ENCODE measurements at regions of chr11 and their contacts with region 1.

Region 1: GRCh38 chr11:12235947-12236743 is 125.8 kb downstream of the MICAL2 start:
- DNase-seq: no peak
- ATAC-seq: peak; percentile 35 to 54 (median 44)
- H3K4me3 ChIP-seq: no peak overlapping the region
- H3K27ac ChIP-seq: peak overlapping the region in 10 of 12 donors; percentile 22 to 82 (median 60)
- H3K4me1 ChIP-seq: peaks cover 0 to 60% (median 30%) of the 10 kb centered on the region in 12 donors
- H3K27me3 ChIP-seq: no peaks in the 10 kb centered on the region
- CTCF ChIP-seq: peak; percentile 54 to 81 (median 73)
- POLR2A ChIP-seq: no peak

Region 2: DNA sequence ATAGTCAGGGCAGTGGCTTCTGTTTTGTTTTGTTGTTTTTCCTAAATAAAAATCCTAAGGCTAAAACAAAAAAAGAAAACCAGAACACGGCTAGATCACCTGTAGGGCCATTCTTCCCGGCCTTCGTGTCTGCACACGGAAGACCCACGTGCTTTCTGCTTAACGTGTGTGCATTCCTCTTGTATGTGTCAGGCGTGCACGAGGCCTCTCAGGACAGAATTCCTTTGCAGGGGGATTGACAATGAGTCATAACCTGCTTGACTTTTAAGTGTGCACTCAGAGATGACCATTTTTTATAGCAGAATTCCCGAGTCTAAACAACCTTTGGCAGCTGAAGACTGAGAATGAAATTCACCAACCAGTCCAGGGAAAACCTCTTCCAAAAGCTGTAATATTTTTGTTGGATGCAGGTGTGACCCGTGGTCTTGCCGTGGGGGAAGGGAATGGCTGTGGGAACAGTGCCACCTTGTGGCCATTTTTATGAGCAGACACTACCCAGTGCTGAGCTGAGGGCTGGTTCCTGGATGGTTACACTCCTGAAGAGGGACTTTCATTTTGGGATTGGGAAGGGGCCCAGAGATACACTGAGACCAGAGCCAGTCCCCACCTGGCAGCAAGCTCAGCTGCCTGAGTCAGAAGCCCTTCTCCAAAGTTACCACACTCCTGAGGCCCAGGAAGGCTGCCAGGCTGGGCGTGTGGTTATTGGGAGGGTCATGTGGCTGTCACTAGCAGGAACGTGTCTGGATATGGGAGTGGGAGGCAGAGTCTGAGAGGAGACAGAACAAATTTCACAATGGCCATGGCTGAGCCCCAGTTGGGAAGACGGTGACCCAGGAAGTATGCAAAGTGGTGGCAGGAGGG is 192.0 kb before region 1 on chr11:
- intact Hi-C with region 1: loop called in 8 of 10 experiments (anchors 1 to 5 kb)
- DNase-seq: peak; percentile 80 to 88 (median 81)
- ATAC-seq: peak; percentile 82 to 90 (median 88)
- H3K4me3 ChIP-seq: peak overlapping the region in 3 of 12 donors; percentile 3 to 12 (median 8)
- H3K27ac ChIP-seq: peak overlapping the region in 11 of 12 donors; percentile 31 to 78 (median 66)
- H3K4me1 ChIP-seq: peaks cover 0 to 23% (median 17%) of the 10 kb centered on the region in 12 donors
- H3K27me3 ChIP-seq: no peaks in the 10 kb centered on the region
- CTCF ChIP-seq: peak; percentile 89 to 98 (median 93)
- POLR2A ChIP-seq: no peak

Region 3: DNA sequence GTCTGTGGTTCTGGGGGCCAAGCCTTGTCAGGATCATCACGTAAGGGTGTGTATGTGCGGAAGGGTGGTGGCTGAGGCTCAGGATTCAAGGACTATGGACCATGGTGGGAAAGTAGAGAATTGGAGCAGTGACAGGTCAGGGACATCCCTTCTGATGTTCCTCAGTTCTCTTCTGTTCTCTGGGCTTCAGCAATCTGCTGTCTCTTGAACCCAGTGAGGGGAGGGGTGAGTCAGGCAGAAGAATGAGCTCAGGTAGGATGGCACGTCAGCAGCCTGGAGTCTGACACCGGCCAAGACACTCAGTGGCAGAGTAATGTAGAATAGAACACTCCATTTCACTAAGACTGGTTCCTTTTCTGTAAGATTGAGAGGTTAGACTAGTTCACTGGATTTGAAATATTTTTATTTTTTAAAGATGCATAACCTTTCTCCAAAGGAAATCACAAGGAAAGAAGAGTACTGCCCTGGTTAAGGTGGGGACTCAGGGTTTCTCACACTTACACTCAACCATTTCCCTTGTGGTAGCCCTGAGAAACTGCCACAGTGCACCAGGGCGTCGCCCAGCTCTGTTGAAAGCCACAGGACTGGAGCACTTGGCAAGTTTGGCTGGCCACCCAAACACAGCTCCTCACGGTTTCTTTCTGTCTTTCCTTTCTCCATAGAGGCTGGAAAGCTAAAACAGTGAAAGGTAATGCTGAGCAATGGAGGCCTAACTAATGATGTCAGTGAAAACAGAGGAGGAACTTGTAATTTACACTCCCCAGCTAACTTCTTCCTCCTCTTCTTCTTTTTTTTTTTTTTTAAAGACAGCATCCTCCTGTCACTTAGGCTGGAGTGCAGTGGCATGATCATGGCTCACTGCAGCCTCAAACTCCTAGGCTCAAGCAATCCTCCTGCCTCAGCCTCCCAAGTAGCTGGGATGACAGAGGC is 148.8 kb before region 1 on chr11:
- intact Hi-C with region 1: loop called (anchors 2 to 10 kb)
- DNase-seq: no peak
- ATAC-seq: peak in 2 of 4 donors; percentile 11 to 16
- H3K4me3 ChIP-seq: peak overlapping the region in 2 of 12 donors; percentile 13 to 20
- H3K27ac ChIP-seq: peak overlapping the region; percentile 73 to 96 (median 85)
- H3K4me1 ChIP-seq: peaks cover 12 to 75% (median 65%) of the 10 kb centered on the region in 12 donors
- H3K27me3 ChIP-seq: no peaks in the 10 kb centered on the region
- CTCF ChIP-seq: no peak
- POLR2A ChIP-seq: no peak

Region 4: DNA sequence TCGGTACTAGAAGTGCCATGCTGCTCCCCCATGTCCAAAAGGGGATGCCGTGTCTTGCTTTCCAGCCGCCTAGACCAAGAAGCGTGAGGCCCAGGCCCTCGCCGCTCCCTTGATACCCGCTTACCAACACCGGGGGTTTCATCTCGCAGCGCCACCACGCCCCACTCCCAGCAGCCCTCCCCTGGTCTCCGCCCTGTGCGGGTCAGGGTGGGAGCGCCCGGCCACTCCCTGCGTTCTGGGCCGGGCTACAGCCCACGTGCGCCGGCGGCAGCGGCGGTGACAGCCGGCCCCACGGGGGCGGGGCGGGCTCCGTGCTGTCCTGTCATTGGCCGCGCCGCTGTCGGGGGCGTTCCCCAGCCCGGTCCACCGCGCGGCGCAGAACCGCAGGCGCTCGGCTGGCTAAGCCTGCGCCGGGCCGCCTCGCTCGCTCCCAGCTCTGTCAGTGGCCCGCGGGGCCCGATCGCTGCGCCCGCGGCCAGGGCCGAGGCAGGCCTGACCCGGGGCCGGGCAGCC is 125.9 kb before region 1 on chr11 and contains the start of gene MICAL2:
- intact Hi-C with region 1: loop called in 3 of 10 experiments (anchors 5 to 10 kb)
- DNase-seq: peak; percentile 92 to 95 (median 93)
- ATAC-seq: peak; percentile 95 to 99 (median 96)
- H3K4me3 ChIP-seq: peak within 1 kb of the TSS; percentile 62 to 93 (median 86)
- H3K27ac ChIP-seq: peak within 1 kb of the TSS; percentile 46 to 91 (median 84)
- H3K4me1 ChIP-seq: peaks cover 0 to 62% (median 49%) of the 10 kb centered on the region in 12 donors
- H3K27me3 ChIP-seq: no peaks in the 10 kb centered on the region
- CTCF ChIP-seq: no peak
- POLR2A ChIP-seq: peak; percentile 46 to 76
- total RNA-seq, gene MICAL2: 48.2 to 110 (median 87.8) TPM

Region 5: GRCh38 chr11:12274558-12275197 is 38.5 kb after region 1 on chr11:
- intact Hi-C with region 1: loop called in 2 of 10 experiments (anchors 5 kb)
- DNase-seq: peak in 1 of 5 donors; percentile 7
- ATAC-seq: peak in 1 of 4 donors; percentile 9
- H3K4me3 ChIP-seq: no peak overlapping the region
- H3K27ac ChIP-seq: no peak overlapping the region
- H3K4me1 ChIP-seq: peaks cover 0 to 11% (median 3%) of the 10 kb centered on the region in 12 donors
- H3K27me3 ChIP-seq: no peaks in the 10 kb centered on the region
- CTCF ChIP-seq: no peak
- POLR2A ChIP-seq: no peak